Ascending aorta (tissue), 2 donors: ENCODE measurements at regions of chrX and their contacts with region 1.

Region 1: DNA sequence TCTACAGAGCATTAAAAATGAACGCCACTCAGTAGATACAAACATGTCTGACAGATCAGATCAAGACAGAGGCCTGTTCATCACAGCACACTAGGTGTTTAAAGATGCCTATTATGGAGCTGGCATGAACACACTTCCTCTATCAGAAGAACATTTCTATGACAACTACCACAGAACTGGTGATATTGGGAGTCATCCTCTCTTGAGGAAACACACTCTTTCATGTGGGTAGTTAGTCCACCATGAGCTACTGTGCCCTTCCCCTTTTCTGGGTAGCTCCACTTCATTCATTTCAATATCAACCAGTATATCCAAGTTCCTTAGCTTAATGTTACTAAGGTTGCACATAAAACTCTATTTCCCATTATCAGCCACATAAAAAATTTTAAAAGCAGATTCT is 46.7 kb downstream of the MAOB start:
- DNase-seq: no peak
- H3K4me3 ChIP-seq: no peak overlapping the region
- H3K27ac ChIP-seq: no peak overlapping the region
- H3K4me1 ChIP-seq: no peaks in the 10 kb centered on the region
- H3K27me3 ChIP-seq: no peaks in the 10 kb centered on the region
- CTCF ChIP-seq: no peak

Region 2: DNA sequence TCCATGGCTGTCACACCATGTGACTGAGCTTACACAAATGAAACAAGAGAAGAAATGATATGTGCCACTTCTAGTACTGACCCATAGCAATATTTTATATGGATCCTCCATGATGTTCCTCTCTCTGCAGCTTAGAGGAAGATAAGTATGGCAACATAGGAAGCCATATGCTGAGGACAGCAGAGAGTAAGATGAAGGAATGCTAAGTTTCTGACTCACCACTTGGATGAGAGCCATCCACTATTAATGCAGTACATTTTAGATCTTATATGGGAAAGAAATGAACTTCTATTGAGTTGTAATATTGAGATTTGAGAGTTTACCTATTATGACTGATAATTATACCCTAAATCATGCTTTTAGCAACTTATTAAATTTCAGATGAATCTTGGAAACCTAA is 566.4 kb before region 1 on chrX:
- intact Hi-C with region 1: no loop called
- DNase-seq: no peak
- H3K4me3 ChIP-seq: no peak overlapping the region
- H3K27ac ChIP-seq: no peak overlapping the region
- H3K4me1 ChIP-seq: no peaks in the 10 kb centered on the region
- H3K27me3 ChIP-seq: no peaks in the 10 kb centered on the region
- CTCF ChIP-seq: no peak

Region 3: GRCh38 chrX:43939187-43939926 is 103.8 kb after region 1 on chrX:
- intact Hi-C with region 1: loop called (anchors 1 kb)
- DNase-seq: no peak
- H3K4me3 ChIP-seq: no peak overlapping the region
- H3K27ac ChIP-seq: no peak overlapping the region
- H3K4me1 ChIP-seq: no peaks in the 10 kb centered on the region
- H3K27me3 ChIP-seq: no peaks in the 10 kb centered on the region
- CTCF ChIP-seq: peak in 2 of 3 experiments; percentile 16 to 32